Motor neuron (in vitro differentiated cells): ENCODE measurements at regions of chr16 and their contacts with region 1.

Region 1: DNA sequence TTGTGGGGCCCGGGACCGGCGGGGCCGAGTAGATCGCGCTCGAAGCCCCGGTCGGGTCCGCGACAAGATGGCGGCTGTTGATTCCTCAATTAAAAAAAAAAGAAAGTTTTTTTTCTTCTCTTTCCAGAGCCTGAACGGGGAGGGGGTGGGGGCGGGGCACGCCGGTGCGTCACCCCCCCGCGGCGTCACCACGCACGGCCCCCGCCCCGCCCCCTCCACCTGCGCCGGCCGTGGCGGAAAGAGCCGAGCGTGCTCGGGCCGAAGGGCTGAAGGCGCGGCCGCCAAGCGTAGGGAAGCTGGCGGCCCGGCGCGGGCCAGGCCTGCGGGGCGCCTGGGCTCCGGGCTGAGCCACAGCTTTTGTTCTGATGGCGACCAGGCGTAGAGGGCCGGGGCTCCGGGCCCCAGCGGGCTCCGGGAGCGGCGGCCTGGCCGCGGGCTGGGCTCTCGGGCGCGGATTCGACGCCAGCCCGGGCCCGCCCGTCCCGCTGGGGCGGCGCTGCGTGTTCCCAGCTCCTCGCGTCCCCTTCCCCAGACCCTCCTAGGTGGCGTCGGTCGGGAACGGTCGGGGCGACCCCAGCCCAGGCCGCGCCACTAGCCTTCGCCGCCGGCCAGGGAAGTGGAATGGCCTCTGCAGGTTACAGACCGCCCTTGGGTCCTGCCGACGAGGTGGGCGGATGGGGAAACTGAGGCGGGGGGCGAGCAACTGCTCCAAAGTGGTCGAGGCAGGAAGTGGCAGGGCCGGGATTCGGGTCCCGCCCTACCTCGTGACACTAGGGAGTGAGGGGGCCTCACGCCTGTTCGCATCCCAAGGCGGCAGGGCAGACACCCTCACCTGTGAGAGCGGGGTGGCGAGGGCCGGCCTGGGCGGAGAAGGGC is at the start of gene CREBBP:
- ATAC-seq: peak; percentile 76 to 89 (median 80)
- H3K4me3 ChIP-seq: peak within 1 kb of the TSS; percentile 70 to 99 (median 85)
- H3K27ac ChIP-seq: peak within 1 kb of the TSS; percentile 99
- H3K4me1 ChIP-seq: peaks cover 17 to 21% of the 10 kb centered on the region in 2 donors
- total RNA-seq, gene CREBBP: 12.1 to 92.4 (median 23.7) TPM

Region 2: DNA sequence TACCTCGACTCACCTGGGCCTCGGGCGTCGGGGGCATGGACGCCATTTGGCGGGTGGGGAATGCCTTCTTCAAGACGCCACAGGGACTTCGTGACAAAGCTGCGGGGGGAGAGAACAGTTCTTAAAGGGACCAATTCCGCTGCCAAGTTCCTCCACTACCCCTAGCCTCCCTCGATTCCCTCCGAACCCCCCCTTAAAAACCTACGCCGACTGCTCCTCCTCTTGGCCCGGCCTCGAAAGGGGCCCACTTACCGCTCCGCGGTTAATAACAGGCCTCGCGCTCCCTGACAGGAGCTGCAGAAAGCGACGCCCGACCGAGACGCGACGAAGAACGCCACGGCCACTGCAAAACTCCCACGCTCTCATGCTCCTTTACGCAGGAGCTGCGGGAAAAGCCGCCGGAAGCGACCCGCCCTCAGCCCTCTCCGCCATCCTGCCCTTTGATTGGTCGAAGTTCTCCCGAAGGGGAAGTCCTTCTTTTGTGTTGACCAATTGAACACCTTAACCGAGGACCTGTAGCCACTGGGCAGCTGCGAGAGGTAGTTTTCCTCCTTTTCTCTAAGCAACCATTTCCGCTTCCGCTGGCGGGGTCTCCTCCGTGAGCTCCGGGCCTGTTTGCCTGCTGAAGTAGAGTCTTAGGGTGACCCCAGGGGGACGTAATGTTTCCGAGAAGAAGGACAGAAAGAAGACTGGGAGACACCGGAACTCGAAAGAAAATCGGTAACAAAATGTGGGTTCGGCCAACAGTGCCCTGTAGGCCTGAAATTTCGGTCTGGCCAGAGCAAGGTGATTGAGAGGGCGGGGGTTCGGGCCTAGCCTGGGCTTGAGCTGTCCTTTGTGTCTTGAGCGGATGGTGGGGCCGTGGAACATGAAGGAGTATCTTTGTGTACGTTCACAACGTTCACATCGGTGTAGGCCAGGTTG is 437.5 kb before region 1 on chr16 and contains the starts of genes NAA60 and ZNF597:
- in situ Hi-C with region 1: no loop called
- ATAC-seq: peak; percentile 94 to 100 (median 98)
- H3K4me3 ChIP-seq: peak within 1 kb of the TSS; percentile 48 to 89 (median 70)
- H3K27ac ChIP-seq: peak within 1 kb of the TSS; percentile 72 to 82
- H3K4me1 ChIP-seq: peaks cover 0 to 6% of the 10 kb centered on the region in 2 donors
- total RNA-seq, gene NAA60: 15.1 to 53.4 (median 25.3) TPM
- total RNA-seq, gene ZNF597: 2.0 to 5.1 (median 2.5) TPM

Region 3: GRCh38 chr16:3690470-3690928 is 190.4 kb before region 1 on chr16:
- in situ Hi-C with region 1: loop called in 1 of 9 experiments (anchors 25 kb)
- ATAC-seq: peak; percentile 88 to 98 (median 95)
- H3K4me3 ChIP-seq: peak overlapping the region in 1 of 5 donors; percentile 2
- H3K27ac ChIP-seq: peak overlapping the region in 1 of 2 donors; percentile 11
- H3K4me1 ChIP-seq: peaks cover 2 to 3% of the 10 kb centered on the region in 2 donors

Region 4: GRCh38 chr16:3983081-3983520 is 102.2 kb after region 1 on chr16:
- in situ Hi-C with region 1: no loop called
- ATAC-seq: peak; percentile 73 to 91 (median 86)
- H3K4me3 ChIP-seq: no peak overlapping the region
- H3K27ac ChIP-seq: no peak overlapping the region
- H3K4me1 ChIP-seq: no peaks in the 10 kb centered on the region